Activated CD4-positive, alpha-beta T cell treated with anti-CD3 and anti-CD28 coated beads for 36 hours (primary cell): ENCODE measurements at regions of chr3 and their contacts with region 1.

Region 1: DNA sequence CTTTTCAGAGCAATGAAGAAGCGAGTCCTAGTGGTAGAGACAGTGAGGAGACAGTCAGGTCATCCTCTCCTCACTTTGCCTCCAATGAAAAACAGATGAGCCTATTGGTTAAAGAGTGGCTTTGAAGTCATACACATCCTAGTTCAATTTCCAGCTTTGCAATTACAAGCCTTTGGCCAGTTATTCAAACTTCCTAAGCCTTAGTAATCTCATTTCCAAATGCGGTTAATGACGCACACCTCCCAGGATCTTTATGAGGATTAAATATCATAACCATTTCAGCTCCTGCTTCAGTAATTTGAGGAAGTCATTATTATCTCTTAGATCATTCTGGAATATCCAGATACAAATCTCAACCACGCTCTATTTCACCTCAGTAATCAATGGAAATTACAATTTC is 10.0 kb upstream of the ST6GAL1 start:
- DNase-seq: no peak
- ATAC-seq: no peak
- H3K4me3 Mint-ChIP-seq: no peak overlapping the region
- H3K27ac Mint-ChIP-seq: no peak overlapping the region
- H3K4me1 Mint-ChIP-seq: peaks cover 22% of the 10 kb centered on the region
- H3K27me3 Mint-ChIP-seq: no peaks in the 10 kb centered on the region

Region 2: GRCh38 chr3:186640473-186640818 is 279.9 kb before region 1 on chr3:
- CTCF ChIA-PET with region 1: no interaction called
- POLR2A ChIA-PET with region 1: no interaction called
- intact Hi-C with region 1: no loop called
- DNase-seq: no peak
- ATAC-seq: no peak
- H3K4me3 Mint-ChIP-seq: no peak overlapping the region
- H3K27ac Mint-ChIP-seq: no peak overlapping the region
- H3K4me1 Mint-ChIP-seq: peaks cover 3% of the 10 kb centered on the region
- H3K27me3 Mint-ChIP-seq: peaks cover 17% of the 10 kb centered on the region

Region 3: GRCh38 chr3:186888569-186888968 is 31.7 kb before region 1 on chr3:
- CTCF ChIA-PET with region 1: no interaction called
- POLR2A ChIA-PET with region 1: no interaction called
- intact Hi-C with region 1: loop called in 1 of 2 experiments (anchors 2 kb)
- DNase-seq: no peak
- ATAC-seq: no peak
- H3K4me3 Mint-ChIP-seq: no peak overlapping the region
- H3K27ac Mint-ChIP-seq: no peak overlapping the region
- H3K4me1 Mint-ChIP-seq: peaks cover 17% of the 10 kb centered on the region
- H3K27me3 Mint-ChIP-seq: no peaks in the 10 kb centered on the region